Panc1 (cell line): ENCODE measurements at regions of chr5 and their contacts with region 1.

Region 1: DNA sequence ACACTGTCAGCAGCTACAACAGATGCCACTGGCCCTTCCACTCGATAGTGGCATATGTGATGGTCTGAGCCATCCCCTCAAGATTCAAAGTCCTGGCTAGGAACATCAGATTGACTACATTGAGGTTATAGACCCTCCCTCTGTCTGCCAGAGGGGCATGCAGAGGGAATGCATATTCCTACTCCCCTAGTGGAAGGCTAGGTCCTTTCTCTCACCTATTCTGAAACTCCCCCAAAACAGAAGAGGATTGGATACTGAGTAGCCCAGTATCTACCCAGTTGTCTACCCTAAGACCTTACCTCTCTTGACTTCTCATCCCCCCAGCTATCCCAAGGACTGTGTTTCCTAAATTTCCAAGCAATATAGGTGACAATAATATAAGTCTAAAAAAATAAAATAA is 78.5 kb upstream of the PDE4D start:
- DNase-seq: no peak
- ATAC-seq: no peak
- H3K4me3 ChIP-seq: no peak overlapping the region
- H3K27ac ChIP-seq: no peak overlapping the region
- H3K4me1 ChIP-seq: no peaks in the 10 kb centered on the region
- H3K27me3 ChIP-seq: no peaks in the 10 kb centered on the region
- CTCF ChIP-seq: no peak

Region 2: GRCh38 chr5:59790399-59791125 is 181.5 kb before region 1 on chr5:
- CTCF ChIA-PET with region 1: no interaction called
- POLR2A ChIA-PET with region 1: interaction called, 14 read pairs
- in situ Hi-C with region 1: no loop called
- intact Hi-C with region 1: no loop called
- DNase-seq: no peak
- ATAC-seq: no peak
- H3K4me3 ChIP-seq: peak overlapping the region in 1 of 2 experiments; percentile 17; a peak in 2 of 4 replicates
- H3K27ac ChIP-seq: no peak overlapping the region
- H3K4me1 ChIP-seq: no peaks in the 10 kb centered on the region
- H3K27me3 ChIP-seq: no peaks in the 10 kb centered on the region
- CTCF ChIP-seq: no peak